CD8-positive, alpha-beta T cell (primary cell): ENCODE measurements at regions of chr17 and their contacts with region 1.

Region 1: DNA sequence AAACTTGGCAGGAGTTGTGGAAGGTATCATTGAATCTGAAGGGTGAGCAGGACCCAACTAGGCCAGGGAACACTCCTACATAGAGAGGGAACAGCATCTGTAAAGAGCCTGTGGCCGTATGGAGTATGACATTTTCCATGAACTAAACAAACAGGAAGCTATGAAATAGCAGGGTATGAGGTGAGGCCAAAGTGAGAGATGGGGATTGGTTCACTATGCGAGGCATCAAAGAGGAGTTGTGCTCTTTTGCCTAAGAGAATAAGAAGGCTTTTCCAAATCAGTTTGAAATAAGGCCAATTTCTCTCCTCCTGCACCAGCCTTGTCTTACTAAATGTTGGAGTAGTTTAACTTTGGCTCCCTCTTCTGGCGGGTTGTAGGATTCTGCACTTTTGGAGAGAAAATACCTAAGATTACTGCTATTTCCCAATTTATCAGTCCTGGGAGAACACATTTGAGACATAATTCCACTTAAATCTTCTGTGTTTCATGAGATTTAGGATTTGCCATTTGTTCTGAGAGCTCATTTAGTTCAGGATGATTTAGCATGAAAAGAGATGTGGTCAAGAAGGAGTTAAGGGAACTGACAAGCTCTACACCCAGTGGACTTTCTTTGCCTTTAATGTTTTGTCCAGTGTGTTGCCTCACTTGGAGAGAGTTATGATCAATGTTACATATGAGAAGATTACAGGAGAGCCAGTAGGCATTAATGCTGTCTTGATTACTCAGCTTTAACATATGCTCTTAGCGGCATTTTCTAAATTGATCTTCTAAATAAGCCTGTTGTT is 55.4 kb downstream of the TNRC6C start:
- DNase-seq: peak; percentile 27 to 82 (median 53)
- ATAC-seq: peak; percentile 65
- H3K4me3 ChIP-seq: no peak overlapping the region
- H3K4me3 Mint-ChIP-seq: no peak overlapping the region
- H3K27ac ChIP-seq: peak overlapping the region in 1 of 2 experiments; percentile 30
- H3K27ac Mint-ChIP-seq: peak overlapping the region; percentile 46
- H3K4me1 ChIP-seq: peaks cover 12% of the 10 kb centered on the region
- H3K4me1 Mint-ChIP-seq: peaks cover 36% of the 10 kb centered on the region
- H3K27me3 ChIP-seq: no peaks in the 10 kb centered on the region
- H3K27me3 Mint-ChIP-seq: no peaks in the 10 kb centered on the region
- CTCF ChIP-seq: peak; percentile 82

Region 2: GRCh38 chr17:77404812-77405581 is 608.9 kb before region 1 on chr17:
- CTCF ChIA-PET with region 1: no interaction called
- POLR2A ChIA-PET with region 1: no interaction called
- intact Hi-C with region 1: loop called in 1 of 2 experiments (anchors 10 kb)
- DNase-seq: peak; percentile 62 to 94 (median 88)
- ATAC-seq: peak; percentile 69
- H3K4me3 ChIP-seq: peak overlapping the region; percentile 58 to 60
- H3K4me3 Mint-ChIP-seq: peak overlapping the region; percentile 93
- H3K27ac ChIP-seq: peak overlapping the region; percentile 65 to 76
- H3K27ac Mint-ChIP-seq: peak overlapping the region; percentile 99
- H3K4me1 ChIP-seq: peaks cover 96% of the 10 kb centered on the region
- H3K4me1 Mint-ChIP-seq: peaks cover 87% of the 10 kb centered on the region
- H3K27me3 ChIP-seq: no peaks in the 10 kb centered on the region
- H3K27me3 Mint-ChIP-seq: no peaks in the 10 kb centered on the region
- CTCF ChIP-seq: no peak

Region 3: GRCh38 chr17:77637807-77638575 is 375.9 kb before region 1 on chr17:
- CTCF ChIA-PET with region 1: interaction called, 11 read pairs
- POLR2A ChIA-PET with region 1: no interaction called
- intact Hi-C with region 1: no loop called
- DNase-seq: no peak
- ATAC-seq: no peak
- H3K4me3 ChIP-seq: no peak overlapping the region
- H3K4me3 Mint-ChIP-seq: no peak overlapping the region
- H3K27ac ChIP-seq: no peak overlapping the region
- H3K27ac Mint-ChIP-seq: no peak overlapping the region
- H3K4me1 ChIP-seq: no peaks in the 10 kb centered on the region
- H3K4me1 Mint-ChIP-seq: peaks cover 9% of the 10 kb centered on the region
- H3K27me3 ChIP-seq: peaks cover 0 to 2% of the 10 kb centered on the region in 2 experiments
- H3K27me3 Mint-ChIP-seq: no peaks in the 10 kb centered on the region
- CTCF ChIP-seq: no peak

Region 4: GRCh38 chr17:77772461-77772897 is 241.4 kb before region 1 on chr17:
- CTCF ChIA-PET with region 1: interaction called, 106 read pairs
- POLR2A ChIA-PET with region 1: interaction called, 3 read pairs
- intact Hi-C with region 1: loop called (anchors 1 kb)
- DNase-seq: peak; percentile 46 to 82 (median 67)
- ATAC-seq: peak; percentile 95
- H3K4me3 ChIP-seq: no peak overlapping the region
- H3K4me3 Mint-ChIP-seq: no peak overlapping the region
- H3K27ac ChIP-seq: no peak overlapping the region
- H3K27ac Mint-ChIP-seq: peak overlapping the region; percentile 73
- H3K4me1 ChIP-seq: peaks cover 7% of the 10 kb centered on the region
- H3K4me1 Mint-ChIP-seq: peaks cover 13% of the 10 kb centered on the region
- H3K27me3 ChIP-seq: no peaks in the 10 kb centered on the region
- H3K27me3 Mint-ChIP-seq: no peaks in the 10 kb centered on the region
- CTCF ChIP-seq: peak; percentile 74

Region 5: DNA sequence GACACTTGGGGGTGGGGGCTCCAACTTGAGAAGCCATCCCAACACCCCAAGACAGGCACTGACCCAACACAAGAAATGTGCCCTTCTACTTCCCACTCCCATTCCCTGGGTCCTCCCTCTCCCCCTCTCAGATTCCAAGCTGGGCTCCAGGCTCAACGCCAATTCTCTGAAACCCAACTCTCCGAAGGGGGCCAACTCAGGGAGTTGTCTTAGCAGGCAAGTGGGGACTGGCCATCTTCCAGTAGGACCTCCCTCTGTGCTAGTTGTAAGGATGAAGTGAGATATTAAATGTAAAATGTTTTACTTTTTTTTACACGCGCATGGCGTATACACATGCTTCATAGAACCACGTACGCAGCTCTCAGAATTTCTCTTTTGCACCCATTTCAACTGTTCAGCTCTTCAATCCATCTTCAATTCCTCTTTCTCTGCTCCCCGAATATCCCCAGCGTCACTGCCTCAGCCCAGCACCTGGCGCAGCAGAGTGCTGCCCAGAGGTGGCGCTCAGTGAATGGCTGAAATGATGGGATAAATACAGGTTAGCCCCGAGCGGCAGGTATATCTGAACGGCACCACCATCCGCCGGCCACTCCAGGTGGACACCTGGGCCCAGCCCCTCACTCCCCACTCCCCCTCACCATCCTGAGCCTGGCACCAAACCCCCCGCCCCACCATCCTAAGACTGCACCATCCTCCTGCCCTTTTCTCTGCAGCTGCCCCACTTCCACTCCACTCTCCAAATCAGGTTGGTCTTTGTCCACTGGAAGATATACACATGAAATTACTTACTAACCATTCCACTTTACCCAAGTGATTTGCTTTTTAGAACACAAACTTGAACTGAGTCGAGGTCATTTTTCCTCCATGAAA is 99.3 kb before region 1 on chr17:
- CTCF ChIA-PET with region 1: interaction called, 8 read pairs
- POLR2A ChIA-PET with region 1: no interaction called
- intact Hi-C with region 1: loop called in 1 of 2 experiments (anchors 5 kb)
- DNase-seq: peak in 1 of 9 experiments; percentile 31
- ATAC-seq: no peak
- H3K4me3 ChIP-seq: no peak overlapping the region
- H3K4me3 Mint-ChIP-seq: no peak overlapping the region
- H3K27ac ChIP-seq: no peak overlapping the region
- H3K27ac Mint-ChIP-seq: no peak overlapping the region
- H3K4me1 ChIP-seq: peaks cover 8% of the 10 kb centered on the region
- H3K4me1 Mint-ChIP-seq: peaks cover 17% of the 10 kb centered on the region
- H3K27me3 ChIP-seq: peaks cover 4 to 5% of the 10 kb centered on the region in 2 experiments
- H3K27me3 Mint-ChIP-seq: peaks cover 29% of the 10 kb centered on the region
- CTCF ChIP-seq: no peak

Region 6: DNA sequence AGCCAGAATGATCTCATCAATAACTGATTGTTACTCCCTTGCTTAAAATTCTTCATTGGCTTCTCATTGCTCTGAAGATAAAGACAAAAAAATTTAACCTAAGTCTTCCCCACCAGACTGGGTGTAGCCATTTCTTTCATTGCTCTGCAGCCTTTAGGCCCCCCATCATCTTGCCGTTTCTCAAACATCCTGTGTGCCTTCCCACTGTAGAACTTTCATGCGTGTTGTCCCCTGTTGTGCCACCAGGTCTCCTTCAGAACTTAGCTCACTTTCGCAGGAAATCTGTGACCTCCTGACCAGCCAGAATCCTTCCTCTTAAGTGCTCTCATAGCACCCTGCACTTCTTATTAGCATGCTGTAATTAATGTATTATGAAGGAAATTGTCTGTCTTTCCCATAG is 23.6 kb before region 1 on chr17:
- CTCF ChIA-PET with region 1: interaction called, 10 read pairs
- POLR2A ChIA-PET with region 1: no interaction called
- intact Hi-C with region 1: no loop called
- DNase-seq: peak in 1 of 9 experiments; percentile 34
- ATAC-seq: peak; percentile 51
- H3K4me3 ChIP-seq: no peak overlapping the region
- H3K4me3 Mint-ChIP-seq: peak overlapping the region; percentile 8
- H3K27ac ChIP-seq: peak overlapping the region in 1 of 2 experiments; percentile 18
- H3K27ac Mint-ChIP-seq: peak overlapping the region; percentile 34
- H3K4me1 ChIP-seq: peaks cover 41% of the 10 kb centered on the region
- H3K4me1 Mint-ChIP-seq: peaks cover 71% of the 10 kb centered on the region
- H3K27me3 ChIP-seq: no peaks in the 10 kb centered on the region
- H3K27me3 Mint-ChIP-seq: no peaks in the 10 kb centered on the region
- CTCF ChIP-seq: no peak

Region 7: GRCh38 chr17:78026381-78026780 is 12.5 kb after region 1 on chr17:
- CTCF ChIA-PET with region 1: interaction called, 54 read pairs
- POLR2A ChIA-PET with region 1: interaction called, 3 read pairs
- intact Hi-C with region 1: no loop called
- DNase-seq: no peak
- ATAC-seq: no peak
- H3K4me3 ChIP-seq: no peak overlapping the region
- H3K4me3 Mint-ChIP-seq: no peak overlapping the region
- H3K27ac ChIP-seq: no peak overlapping the region
- H3K27ac Mint-ChIP-seq: no peak overlapping the region
- H3K4me1 ChIP-seq: peaks cover 7% of the 10 kb centered on the region
- H3K4me1 Mint-ChIP-seq: peaks cover 37% of the 10 kb centered on the region
- H3K27me3 ChIP-seq: no peaks in the 10 kb centered on the region
- H3K27me3 Mint-ChIP-seq: no peaks in the 10 kb centered on the region
- CTCF ChIP-seq: no peak

Region 8: DNA sequence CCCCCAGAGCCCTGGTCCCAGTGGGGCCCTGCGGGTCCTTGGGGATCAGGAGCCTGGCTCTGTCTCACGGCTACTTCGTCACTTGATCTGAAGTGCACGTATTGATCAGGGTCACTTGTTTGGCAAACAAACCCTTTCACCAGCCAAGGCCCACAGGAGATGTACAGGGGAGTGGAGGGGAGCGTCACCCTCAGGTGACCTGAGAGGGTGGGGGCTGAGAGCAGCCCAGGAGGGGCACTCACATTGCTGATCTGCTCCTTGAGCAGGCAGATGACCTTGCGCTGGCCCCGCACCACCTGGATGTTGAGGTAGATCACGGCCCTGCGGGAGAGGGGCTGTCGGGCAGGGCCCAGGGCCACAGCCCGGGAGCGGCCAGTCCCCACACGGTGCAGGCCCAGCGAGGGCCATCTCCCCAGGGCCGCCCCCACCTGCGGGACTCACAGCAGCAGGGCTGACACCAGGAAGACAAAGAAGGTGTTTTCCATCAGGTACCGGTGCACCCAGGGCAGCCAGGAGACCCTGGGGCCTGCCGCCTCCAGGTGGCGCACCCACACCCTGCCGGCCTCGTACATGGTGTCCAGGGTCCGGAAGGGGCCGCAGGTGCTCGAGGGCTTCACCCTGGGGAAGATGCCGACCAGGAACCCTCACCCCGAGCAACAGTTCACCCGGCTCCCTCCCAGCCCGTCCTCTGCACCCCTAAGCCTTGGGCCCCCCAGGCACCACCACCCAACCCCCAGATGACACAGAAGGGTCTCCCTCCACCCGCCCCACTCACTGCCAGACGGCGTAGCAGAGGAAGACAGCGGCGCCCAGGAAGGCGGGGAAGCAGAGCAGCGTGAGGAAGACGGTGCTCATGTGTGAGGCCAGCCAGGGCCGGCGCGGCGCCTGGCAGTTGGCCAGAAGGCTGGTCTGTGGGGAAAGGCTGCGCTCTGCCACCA is 103.4 kb after region 1 on chr17:
- CTCF ChIA-PET with region 1: no interaction called
- POLR2A ChIA-PET with region 1: no interaction called
- intact Hi-C with region 1: no loop called
- DNase-seq: peak in 6 of 9 experiments; percentile 33 to 66 (median 48)
- ATAC-seq: no peak
- H3K4me3 ChIP-seq: no peak overlapping the region
- H3K4me3 Mint-ChIP-seq: no peak overlapping the region
- H3K27ac ChIP-seq: no peak overlapping the region
- H3K27ac Mint-ChIP-seq: peak overlapping the region; percentile 84
- H3K4me1 ChIP-seq: peaks cover 83% of the 10 kb centered on the region
- H3K4me1 Mint-ChIP-seq: peaks cover 60% of the 10 kb centered on the region
- H3K27me3 ChIP-seq: no peaks in the 10 kb centered on the region
- H3K27me3 Mint-ChIP-seq: no peaks in the 10 kb centered on the region
- CTCF ChIP-seq: no peak